ENCODE measurements at regions of chr12 and their contacts with region 1.

Region 1: GRCh38 chr12:123150744-123151456 is at the start of gene PITPNM2:
- DNase-seq: peak; percentile 91
- H3K4me3 ChIP-seq: peak within 1 kb of the TSS; percentile 49 to 74 (median 64)
- H3K27ac ChIP-seq: peak within 1 kb of the TSS; percentile 60 to 84 (median 80)
- H3K4me1 ChIP-seq: peaks cover 19 to 51% (median 31%) of the 10 kb centered on the region in 6 donors
- H3K27me3 ChIP-seq: peaks cover 0 to 17% (median 0%) of the 10 kb centered on the region in 7 donors
- CTCF ChIP-seq: peak in 4 of 11 experiments; percentile 12 to 35 (median 18)
- POLR2A ChIP-seq: no peak
- total RNA-seq, gene PITPNM2: 7.1 to 23.7 (median 13.9) TPM

Region 2: DNA sequence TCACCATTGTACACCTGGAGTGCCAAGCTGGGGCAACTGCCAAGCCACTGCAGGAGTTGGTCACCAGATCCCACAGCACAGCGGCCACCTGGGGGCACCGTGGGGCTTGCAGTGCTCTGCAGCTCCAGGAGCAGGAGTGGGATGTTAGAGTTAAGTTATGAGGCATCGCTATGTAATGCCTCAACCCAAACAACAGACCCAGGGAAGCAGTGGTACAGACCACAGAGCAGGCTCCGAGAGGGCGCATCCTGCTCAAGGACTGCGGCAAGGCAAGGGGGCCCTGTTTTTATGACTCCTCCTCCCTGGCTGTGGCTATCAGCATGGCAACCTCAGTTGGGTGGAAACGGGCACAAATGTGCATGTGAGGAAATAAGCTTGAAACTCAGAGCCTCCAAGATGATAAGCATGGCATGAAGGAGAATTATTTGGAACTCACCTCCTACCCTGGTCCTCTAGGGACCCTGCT is 107.3 kb before region 1 on chr12:
- intact Hi-C with region 1: loop called (anchors 10 kb)
- DNase-seq: peak; percentile 95
- H3K4me3 ChIP-seq: no peak overlapping the region
- H3K27ac ChIP-seq: peak overlapping the region in 3 of 8 donors; percentile 3 to 33 (median 14)
- H3K4me1 ChIP-seq: peaks cover 9 to 39% (median 16%) of the 10 kb centered on the region in 6 donors
- H3K27me3 ChIP-seq: no peaks in the 10 kb centered on the region
- CTCF ChIP-seq: peak in 10 of 11 experiments; percentile 56 to 82 (median 71)
- POLR2A ChIP-seq: no peak

Region 3: GRCh38 chr12:123106628-123107359 is 44.1 kb before region 1 on chr12:
- intact Hi-C with region 1: no loop called
- DNase-seq: peak; percentile 93
- H3K4me3 ChIP-seq: peak overlapping the region in 1 of 8 donors; percentile 31
- H3K27ac ChIP-seq: peak overlapping the region; percentile 51 to 87 (median 70)
- H3K4me1 ChIP-seq: peaks cover 21 to 66% (median 48%) of the 10 kb centered on the region in 6 donors
- H3K27me3 ChIP-seq: no peaks in the 10 kb centered on the region
- CTCF ChIP-seq: no peak
- POLR2A ChIP-seq: no peak